Spleen (tissue), 13 donors: ENCODE measurements at regions of chr17 and their contacts with region 1.

Region 1: DNA sequence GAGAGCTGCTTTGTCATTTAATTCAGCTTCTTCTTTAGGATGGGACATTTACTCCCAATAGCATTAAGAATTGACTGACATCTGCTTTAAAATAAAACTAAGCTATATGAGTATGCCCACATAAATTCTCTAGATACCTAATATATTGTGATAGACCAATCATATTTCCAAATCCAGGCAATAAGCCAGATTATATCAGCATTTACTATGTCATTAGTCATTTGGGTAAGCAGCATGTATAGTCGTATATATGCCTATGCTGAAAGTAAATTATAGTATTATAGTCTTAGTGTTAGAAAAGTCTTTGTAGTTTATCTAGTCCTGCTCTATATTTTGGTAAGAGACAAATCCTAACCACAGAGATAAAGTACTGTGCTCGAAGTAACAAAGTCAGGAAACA is 958.1 kb downstream of the KCNJ2 start:
- DNase-seq: no peak
- H3K4me3 ChIP-seq: no peak overlapping the region
- H3K27ac ChIP-seq: no peak overlapping the region
- H3K4me1 ChIP-seq: no peaks in the 10 kb centered on the region
- H3K27me3 ChIP-seq: no peaks in the 10 kb centered on the region
- CTCF ChIP-seq: no peak
- POLR2A ChIP-seq: no peak

Region 2: GRCh38 chr17:71208111-71208704 is 80.8 kb after region 1 on chr17:
- intact Hi-C with region 1: loop called (anchors 10 kb)
- DNase-seq: no peak
- H3K4me3 ChIP-seq: no peak overlapping the region
- H3K27ac ChIP-seq: no peak overlapping the region
- H3K4me1 ChIP-seq: no peaks in the 10 kb centered on the region
- H3K27me3 ChIP-seq: no peaks in the 10 kb centered on the region
- CTCF ChIP-seq: no peak
- POLR2A ChIP-seq: no peak